ENCODE measurements at regions of chr2 and their contacts with region 1.

Region 1: DNA sequence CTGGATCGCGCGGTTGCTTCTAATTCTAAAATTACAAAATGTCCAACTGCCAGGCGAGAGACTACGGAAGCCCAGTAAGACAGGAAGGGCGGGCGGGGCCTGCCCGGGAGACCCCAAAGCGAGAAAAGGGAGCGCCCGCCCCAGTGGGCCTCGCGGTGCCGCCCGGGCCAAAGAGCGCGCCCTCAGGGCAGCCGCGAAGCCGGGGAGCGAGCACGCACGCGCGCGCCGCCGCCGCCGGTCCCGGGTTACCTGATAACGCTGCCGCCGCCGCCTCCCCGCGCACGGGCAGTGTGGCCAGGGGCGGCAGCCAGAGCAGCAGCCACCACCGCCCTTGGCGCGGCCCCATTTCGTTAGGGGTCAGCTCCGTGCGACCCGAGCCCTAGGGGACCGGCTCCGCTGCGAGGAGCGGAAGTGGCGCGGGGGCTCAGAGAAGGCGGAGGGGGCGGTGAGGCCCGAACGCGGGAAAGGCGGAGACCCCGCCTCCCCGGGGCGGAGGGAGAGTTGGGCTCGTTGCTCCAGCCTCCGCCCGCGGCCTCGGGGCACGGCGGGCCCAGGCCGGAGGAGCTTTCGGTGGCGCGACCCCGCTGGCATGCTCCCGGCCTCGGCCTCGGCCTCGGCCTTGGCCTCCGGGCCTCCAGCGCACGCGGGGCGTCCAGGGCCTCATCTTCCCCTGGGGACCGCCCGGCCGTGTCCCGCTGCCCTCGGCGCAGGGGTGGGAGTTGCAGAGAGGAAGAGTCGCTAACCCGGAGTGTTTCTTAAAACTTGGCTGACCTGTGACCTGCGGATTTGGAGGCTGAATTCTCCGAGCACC is at the start of gene NEMP2:
- DNase-seq: peak; percentile 72 to 88 (median 78)
- ATAC-seq: peak; percentile 83
- H3K4me3 ChIP-seq: peak within 1 kb of the TSS; percentile 73
- H3K4me3 Mint-ChIP-seq: peak within 1 kb of the TSS; percentile 91 to 99 (median 97)
- H3K27ac ChIP-seq: peak within 1 kb of the TSS; percentile 96
- H3K27ac Mint-ChIP-seq: peak within 1 kb of the TSS; percentile 99 to 100 (median 100)
- H3K4me1 ChIP-seq: peaks cover 20 to 36% of the 10 kb centered on the region in 2 donors
- H3K4me1 Mint-ChIP-seq: peaks cover 19 to 63% (median 60%) of the 10 kb centered on the region in 7 donors
- H3K27me3 ChIP-seq: no peaks in the 10 kb centered on the region
- H3K27me3 Mint-ChIP-seq: no peaks in the 10 kb centered on the region
- total RNA-seq, gene NEMP2: 11.1 to 30.8 (median 18.4) TPM

Region 2: GRCh38 chr2:189674374-189675112 is 860.0 kb before region 1 on chr2 and contains the start of gene ANKAR:
- CTCF ChIA-PET with region 1: no interaction called
- POLR2A ChIA-PET with region 1: no interaction called
- intact Hi-C with region 1: loop called in 1 of 2 experiments (anchors 10 kb)
- DNase-seq: peak; percentile 71 to 88 (median 84)
- ATAC-seq: peak; percentile 98
- H3K4me3 ChIP-seq: peak within 1 kb of the TSS; percentile 62
- H3K4me3 Mint-ChIP-seq: peak within 1 kb of the TSS; percentile 88 to 96 (median 95)
- H3K27ac ChIP-seq: peak within 1 kb of the TSS; percentile 86
- H3K27ac Mint-ChIP-seq: peak within 1 kb of the TSS; percentile 96 to 99 (median 97)
- H3K4me1 ChIP-seq: peaks cover 9 to 12% of the 10 kb centered on the region in 2 donors
- H3K4me1 Mint-ChIP-seq: peaks cover 17 to 49% (median 40%) of the 10 kb centered on the region in 7 donors
- H3K27me3 ChIP-seq: no peaks in the 10 kb centered on the region
- H3K27me3 Mint-ChIP-seq: no peaks in the 10 kb centered on the region
- total RNA-seq, gene ANKAR: 4.3 to 17.9 (median 10.3) TPM

Region 3: GRCh38 chr2:190319555-190320498 is 214.7 kb before region 1 on chr2 and contains the start of gene HIBCH:
- CTCF ChIA-PET with region 1: no interaction called
- POLR2A ChIA-PET with region 1: no interaction called
- intact Hi-C with region 1: loop called (anchors 5 kb)
- DNase-seq: peak; percentile 56 to 88 (median 68)
- ATAC-seq: peak; percentile 94
- H3K4me3 ChIP-seq: peak within 1 kb of the TSS; percentile 83
- H3K4me3 Mint-ChIP-seq: peak within 1 kb of the TSS; percentile 85 to 100 (median 97)
- H3K27ac ChIP-seq: peak within 1 kb of the TSS; percentile 82
- H3K27ac Mint-ChIP-seq: peak within 1 kb of the TSS; percentile 91 to 99 (median 95)
- H3K4me1 ChIP-seq: peaks cover 8 to 13% of the 10 kb centered on the region in 2 donors
- H3K4me1 Mint-ChIP-seq: peaks cover 27 to 54% (median 48%) of the 10 kb centered on the region in 7 donors
- H3K27me3 ChIP-seq: no peaks in the 10 kb centered on the region
- H3K27me3 Mint-ChIP-seq: no peaks in the 10 kb centered on the region
- total RNA-seq, gene HIBCH: 11.3 to 25.0 (median 21.6) TPM

Region 4: GRCh38 chr2:190511104-190511503 is 23.4 kb before region 1 on chr2:
- CTCF ChIA-PET with region 1: no interaction called
- POLR2A ChIA-PET with region 1: interaction called, 47 read pairs
- intact Hi-C with region 1: loop called (anchors 1 kb)
- DNase-seq: no peak
- ATAC-seq: no peak
- H3K4me3 ChIP-seq: no peak overlapping the region
- H3K4me3 Mint-ChIP-seq: no peak overlapping the region
- H3K27ac ChIP-seq: no peak overlapping the region
- H3K27ac Mint-ChIP-seq: peak overlapping the region in 4 of 9 donors; percentile 1 to 64 (median 43)
- H3K4me1 ChIP-seq: peaks cover 8 to 10% of the 10 kb centered on the region in 2 donors
- H3K4me1 Mint-ChIP-seq: peaks cover 7 to 36% (median 26%) of the 10 kb centered on the region in 7 donors
- H3K27me3 ChIP-seq: no peaks in the 10 kb centered on the region
- H3K27me3 Mint-ChIP-seq: no peaks in the 10 kb centered on the region

Region 5: DNA sequence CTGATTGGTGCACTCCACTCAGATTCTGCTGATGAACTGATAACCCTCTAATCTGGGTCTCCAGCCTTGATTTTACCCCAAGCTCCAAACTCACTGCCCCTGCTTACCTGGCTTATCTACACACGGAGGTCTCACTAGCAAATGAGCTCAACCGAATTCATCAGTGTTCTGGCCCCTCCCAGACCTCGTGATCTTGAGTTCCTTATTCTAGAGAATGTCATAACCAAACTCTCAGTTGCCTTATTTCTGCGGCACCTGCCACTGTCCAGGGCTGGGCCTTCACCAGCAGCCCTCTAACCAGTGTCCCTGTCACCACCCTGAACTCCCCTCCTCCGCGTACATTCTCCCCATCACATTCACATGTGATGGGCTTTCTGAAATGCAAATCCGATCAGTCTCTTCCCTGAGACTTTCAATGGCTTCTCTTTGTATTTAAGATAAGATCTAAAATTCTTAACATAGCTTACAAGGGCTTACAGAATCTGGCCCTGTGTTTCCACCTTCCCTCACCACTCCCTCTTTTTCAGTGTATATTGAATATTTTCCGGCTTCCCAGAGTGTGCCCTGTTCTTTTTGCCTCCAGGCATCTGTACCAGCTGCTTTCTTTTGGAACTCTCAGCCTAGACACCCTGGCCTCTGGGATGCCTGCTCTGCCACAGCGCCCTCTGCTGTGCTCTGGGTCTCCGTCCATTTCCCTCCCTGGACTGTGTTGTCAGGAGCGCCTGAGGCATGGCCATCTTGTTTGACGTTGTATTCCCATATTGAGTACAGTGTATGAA is 145.5 kb after region 1 on chr2:
- CTCF ChIA-PET with region 1: no interaction called
- POLR2A ChIA-PET with region 1: interaction called, 3 read pairs
- intact Hi-C with region 1: loop called in 1 of 2 experiments (anchors 2 kb)
- DNase-seq: peak; percentile 27 to 59 (median 46)
- ATAC-seq: peak; percentile 92
- H3K4me3 ChIP-seq: no peak overlapping the region
- H3K4me3 Mint-ChIP-seq: peak overlapping the region in 2 of 10 donors; percentile 8
- H3K27ac ChIP-seq: no peak overlapping the region
- H3K27ac Mint-ChIP-seq: peak overlapping the region in 7 of 9 donors; percentile 7 to 74 (median 52)
- H3K4me1 ChIP-seq: peaks cover 5 to 10% of the 10 kb centered on the region in 2 donors
- H3K4me1 Mint-ChIP-seq: peaks cover 17 to 49% (median 41%) of the 10 kb centered on the region in 7 donors
- H3K27me3 ChIP-seq: no peaks in the 10 kb centered on the region
- H3K27me3 Mint-ChIP-seq: no peaks in the 10 kb centered on the region

Region 6: GRCh38 chr2:190759749-190760213 is 225.3 kb after region 1 on chr2:
- CTCF ChIA-PET with region 1: no interaction called
- POLR2A ChIA-PET with region 1: no interaction called
- intact Hi-C with region 1: no loop called
- DNase-seq: no peak
- ATAC-seq: no peak
- H3K4me3 ChIP-seq: no peak overlapping the region
- H3K4me3 Mint-ChIP-seq: peak overlapping the region in 2 of 10 donors; percentile 44 to 72
- H3K27ac ChIP-seq: no peak overlapping the region
- H3K27ac Mint-ChIP-seq: peak overlapping the region in 1 of 9 donors; percentile 34
- H3K4me1 ChIP-seq: no peaks in the 10 kb centered on the region
- H3K4me1 Mint-ChIP-seq: peaks cover 2 to 18% (median 8%) of the 10 kb centered on the region in 7 donors
- H3K27me3 ChIP-seq: no peaks in the 10 kb centered on the region
- H3K27me3 Mint-ChIP-seq: peaks cover 0 to 8% (median 0%) of the 10 kb centered on the region in 5 donors

Region 7: GRCh38 chr2:191617575-191617974 is 1083.1 kb after region 1 on chr2:
- CTCF ChIA-PET with region 1: no interaction called
- POLR2A ChIA-PET with region 1: no interaction called
- intact Hi-C with region 1: loop called in 1 of 2 experiments (anchors 10 kb)
- DNase-seq: peak in 8 of 9 donors; percentile 47 to 89 (median 84)
- ATAC-seq: peak; percentile 92
- H3K4me3 ChIP-seq: peak overlapping the region; percentile 11
- H3K4me3 Mint-ChIP-seq: peak overlapping the region; percentile 0 to 71 (median 40)
- H3K27ac ChIP-seq: peak overlapping the region; percentile 84
- H3K27ac Mint-ChIP-seq: peak overlapping the region; percentile 80 to 98 (median 89)
- H3K4me1 ChIP-seq: peaks cover 21 to 22% of the 10 kb centered on the region in 2 donors
- H3K4me1 Mint-ChIP-seq: peaks cover 31 to 59% (median 51%) of the 10 kb centered on the region in 7 donors
- H3K27me3 ChIP-seq: no peaks in the 10 kb centered on the region
- H3K27me3 Mint-ChIP-seq: no peaks in the 10 kb centered on the region

Region 8: DNA sequence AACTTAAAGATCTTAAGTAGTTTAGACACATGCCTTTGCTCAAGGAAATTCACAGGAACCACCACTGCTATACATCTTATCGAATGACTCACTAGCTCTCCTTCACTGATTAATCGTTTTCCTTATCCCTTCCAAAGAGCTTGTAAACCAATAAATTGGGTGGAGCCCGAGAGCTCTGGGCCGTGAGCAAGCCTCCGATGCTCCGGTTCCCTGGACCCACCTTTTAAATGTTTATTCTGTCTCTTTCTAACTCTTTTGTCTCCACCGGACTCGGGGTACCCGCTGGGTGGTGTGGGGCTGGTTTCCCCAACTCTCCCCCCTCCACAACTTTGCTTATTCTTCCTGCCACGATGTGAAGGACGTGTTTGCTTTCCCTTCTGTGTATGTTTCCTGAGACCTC is 1953.1 kb after region 1 on chr2:
- CTCF ChIA-PET with region 1: no interaction called
- POLR2A ChIA-PET with region 1: no interaction called
- intact Hi-C with region 1: no loop called
- DNase-seq: no peak
- ATAC-seq: no peak
- H3K4me3 ChIP-seq: no peak overlapping the region
- H3K4me3 Mint-ChIP-seq: no peak overlapping the region
- H3K27ac ChIP-seq: no peak overlapping the region
- H3K27ac Mint-ChIP-seq: no peak overlapping the region
- H3K4me1 ChIP-seq: no peaks in the 10 kb centered on the region
- H3K4me1 Mint-ChIP-seq: no peaks in the 10 kb centered on the region
- H3K27me3 ChIP-seq: peaks cover 0 to 3% of the 10 kb centered on the region in 2 donors
- H3K27me3 Mint-ChIP-seq: peaks cover 0 to 4% (median 0%) of the 10 kb centered on the region in 5 donors

Measured in naive thymus-derived CD4-positive, alpha-beta T cell (primary cell).